Activated B cell treated with CpG ODN at 0.5 μM for 24 hours (primary cell): ENCODE measurements at regions of chr11 and their contacts with region 1.

Region 1: GRCh38 chr11:76919887-76920746 is 59.4 kb downstream of the ACER3 start:
- DNase-seq: peak; percentile 30
- ATAC-seq: peak; percentile 76
- H3K4me3 Mint-ChIP-seq: peak overlapping the region; percentile 67
- H3K27ac Mint-ChIP-seq: no peak overlapping the region
- H3K4me1 Mint-ChIP-seq: peaks cover 7% of the 10 kb centered on the region
- H3K27me3 Mint-ChIP-seq: no peaks in the 10 kb centered on the region
- CTCF ChIP-seq: peak; percentile 80

Region 2: DNA sequence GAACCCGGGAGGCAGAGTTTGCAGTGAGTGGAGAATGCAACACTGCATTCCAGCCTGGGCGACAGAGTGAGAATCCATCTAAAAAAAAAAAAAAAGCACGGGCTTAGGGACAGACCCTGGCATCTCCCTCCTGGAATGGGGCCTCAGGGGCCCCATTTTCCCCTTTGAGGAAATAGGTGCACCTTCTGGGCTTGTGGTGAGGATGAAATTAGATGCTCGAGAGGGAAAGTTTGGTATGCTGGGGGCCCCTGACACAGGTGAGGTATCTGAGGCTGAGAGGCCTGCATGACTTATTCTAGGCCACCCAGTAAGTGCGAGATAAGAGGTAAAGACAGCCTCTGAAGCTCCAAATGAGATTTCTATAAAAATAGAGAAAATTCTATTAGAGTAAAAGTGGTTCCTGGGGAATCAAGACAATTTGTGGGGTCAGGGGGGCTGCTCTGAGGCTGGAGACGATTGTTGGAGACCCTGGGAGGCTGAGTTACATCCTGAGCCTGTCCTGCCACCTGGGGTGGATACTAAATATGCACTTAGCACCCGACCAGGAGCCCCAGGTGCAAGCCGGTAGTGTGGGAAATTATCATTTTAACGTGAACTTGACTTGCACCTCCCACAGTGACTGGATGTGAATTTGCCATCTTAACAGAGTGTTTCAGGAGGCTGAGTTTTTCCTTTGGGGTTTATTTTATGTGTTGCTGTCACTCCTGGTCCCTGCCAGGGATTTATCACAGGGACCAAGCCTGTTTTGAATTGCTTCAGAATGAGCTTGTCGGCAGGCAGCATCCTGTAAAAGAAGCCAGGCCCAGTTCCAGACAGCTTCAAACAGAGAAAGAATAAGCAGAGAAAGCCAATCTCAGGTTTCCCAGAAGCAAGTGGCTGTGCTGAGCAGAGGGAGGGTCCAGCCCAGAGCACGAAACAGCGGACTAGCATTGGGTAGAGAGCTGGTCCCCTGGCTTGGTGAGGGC is 185.4 kb before region 1 on chr11:
- CTCF ChIA-PET with region 1: interaction called, 9 read pairs
- POLR2A ChIA-PET with region 1: no interaction called
- intact Hi-C with region 1: loop called (anchors 1 kb)
- DNase-seq: no peak
- ATAC-seq: no peak
- H3K4me3 Mint-ChIP-seq: no peak overlapping the region
- H3K27ac Mint-ChIP-seq: no peak overlapping the region
- H3K4me1 Mint-ChIP-seq: no peaks in the 10 kb centered on the region
- H3K27me3 Mint-ChIP-seq: peaks cover 5% of the 10 kb centered on the region
- CTCF ChIP-seq: no peak

Region 3: DNA sequence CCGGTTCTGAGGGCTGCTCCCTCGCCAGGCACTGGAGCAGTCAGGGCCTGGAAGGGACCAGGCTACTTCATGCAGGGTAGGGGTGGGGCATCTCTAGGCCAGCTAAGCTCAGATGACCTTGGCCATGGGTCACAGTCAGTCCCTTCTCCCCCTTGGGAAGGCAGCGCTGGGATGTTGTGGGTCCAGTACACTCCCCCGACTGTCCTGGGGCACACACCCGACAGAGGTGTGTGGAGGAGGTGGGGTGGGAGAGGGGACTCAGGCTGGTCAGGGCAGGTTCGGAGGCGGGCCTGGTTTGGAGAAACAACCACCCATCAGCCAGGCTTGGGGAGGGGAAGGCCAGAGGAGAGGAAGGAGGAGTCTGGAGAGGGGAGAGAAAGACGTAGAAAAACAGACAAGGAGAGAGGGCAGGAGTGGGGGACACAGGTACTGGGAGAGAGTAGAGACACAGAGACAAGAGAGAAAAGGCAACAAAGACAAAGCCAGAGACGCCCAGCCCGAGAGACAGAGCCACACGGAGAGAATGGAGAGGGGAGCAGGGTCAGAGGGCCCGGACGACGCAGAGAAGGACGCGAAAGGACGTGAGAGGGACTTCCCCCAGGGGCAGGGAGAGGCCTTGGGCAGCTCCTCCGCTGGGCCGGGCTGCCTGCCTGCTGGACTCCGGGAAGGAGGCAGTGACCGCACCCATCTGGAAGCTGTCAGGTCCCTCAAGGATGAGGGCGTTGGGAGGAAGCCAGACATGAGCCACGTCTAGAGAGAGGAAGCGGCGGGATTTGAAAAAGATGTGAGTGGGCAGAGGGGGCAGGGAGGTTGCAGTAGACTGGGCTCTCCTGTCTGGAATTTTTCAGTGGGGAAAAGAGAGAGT is 167.6 kb before region 1 on chr11:
- CTCF ChIA-PET with region 1: no interaction called
- POLR2A ChIA-PET with region 1: no interaction called
- intact Hi-C with region 1: no loop called
- DNase-seq: no peak
- ATAC-seq: no peak
- H3K4me3 Mint-ChIP-seq: no peak overlapping the region
- H3K27ac Mint-ChIP-seq: no peak overlapping the region
- H3K4me1 Mint-ChIP-seq: no peaks in the 10 kb centered on the region
- H3K27me3 Mint-ChIP-seq: peaks cover 2% of the 10 kb centered on the region
- CTCF ChIP-seq: no peak

Region 4: GRCh38 chr11:76807206-76807875 is 112.8 kb before region 1 on chr11:
- CTCF ChIA-PET with region 1: interaction called, 65 read pairs
- POLR2A ChIA-PET with region 1: no interaction called
- intact Hi-C with region 1: loop called (anchors 1 kb)
- DNase-seq: peak; percentile 52
- ATAC-seq: peak; percentile 65
- H3K4me3 Mint-ChIP-seq: no peak overlapping the region
- H3K27ac Mint-ChIP-seq: no peak overlapping the region
- H3K4me1 Mint-ChIP-seq: peaks cover 7% of the 10 kb centered on the region
- H3K27me3 Mint-ChIP-seq: peaks cover 54% of the 10 kb centered on the region
- CTCF ChIP-seq: peak; percentile 74

Region 5: GRCh38 chr11:77047007-77047927 is 127.2 kb after region 1 on chr11:
- CTCF ChIA-PET with region 1: no interaction called
- POLR2A ChIA-PET with region 1: no interaction called
- intact Hi-C with region 1: loop called (anchors 1 kb)
- DNase-seq: no peak
- ATAC-seq: peak; percentile 91
- H3K4me3 Mint-ChIP-seq: peak overlapping the region; percentile 71
- H3K27ac Mint-ChIP-seq: peak overlapping the region; percentile 64
- H3K4me1 Mint-ChIP-seq: peaks cover 12% of the 10 kb centered on the region
- H3K27me3 Mint-ChIP-seq: peaks cover 22% of the 10 kb centered on the region
- CTCF ChIP-seq: no peak

Region 6: GRCh38 chr11:77187776-77188632 is 267.9 kb after region 1 on chr11:
- CTCF ChIA-PET with region 1: no interaction called
- POLR2A ChIA-PET with region 1: no interaction called
- intact Hi-C with region 1: loop called (anchors 5 kb)
- DNase-seq: peak; percentile 35
- ATAC-seq: peak; percentile 54
- H3K4me3 Mint-ChIP-seq: no peak overlapping the region
- H3K27ac Mint-ChIP-seq: no peak overlapping the region
- H3K4me1 Mint-ChIP-seq: no peaks in the 10 kb centered on the region
- H3K27me3 Mint-ChIP-seq: no peaks in the 10 kb centered on the region
- CTCF ChIP-seq: peak; percentile 41